ENCODE measurements at regions of chr11 and their contacts with region 1.

Region 1: DNA sequence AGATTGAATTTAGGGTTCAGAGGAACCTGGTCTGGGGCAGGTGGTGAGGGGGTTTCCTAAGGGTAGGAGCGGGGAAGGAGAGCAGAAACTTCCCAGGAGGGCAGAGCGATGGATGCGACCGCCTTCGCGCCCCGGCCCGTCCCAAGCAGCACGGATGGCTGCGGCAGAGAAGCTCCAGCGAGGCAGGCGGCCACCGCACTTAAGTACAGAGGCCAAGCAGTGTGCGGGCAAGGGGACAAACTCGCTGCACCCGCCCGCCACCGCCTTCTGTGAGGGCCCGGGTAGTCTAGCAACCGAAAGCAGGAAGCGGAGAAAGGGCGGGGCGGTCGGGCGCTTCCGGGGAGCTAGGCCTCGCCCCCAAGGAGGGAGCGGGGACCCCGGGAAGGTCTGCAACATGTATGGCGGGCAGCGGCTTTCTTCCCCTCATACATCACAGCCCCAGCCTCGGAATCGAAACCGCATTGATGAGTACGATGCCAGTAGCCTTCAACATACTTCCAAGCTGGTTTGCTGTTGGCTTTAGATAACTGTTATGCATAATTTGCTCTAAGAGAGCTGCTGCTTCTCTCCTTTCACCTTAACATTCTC is at the start of gene AGBL2:
- DNase-seq: peak; percentile 25
- ATAC-seq: peak; percentile 100
- H3K4me3 ChIP-seq: peak within 1 kb of the TSS; percentile 87
- H3K27ac ChIP-seq: peak within 1 kb of the TSS; percentile 85
- H3K4me1 ChIP-seq: no peaks in the 10 kb centered on the region
- H3K27me3 ChIP-seq: no peaks in the 10 kb centered on the region
- CTCF ChIP-seq: no peak
- EP300 ChIP-seq: no peak
- POLR2A ChIP-seq: peak; percentile 97
- RAD21 ChIP-seq: no peak
- polyA plus RNA-seq, gene AGBL2: 0.93 to 1.6 TPM

Region 2: GRCh38 chr11:46677991-46678740 is 1037.0 kb before region 1 on chr11:
- CTCF ChIA-PET with region 1: no interaction called
- POLR2A ChIA-PET with region 1: no interaction called
- RAD21 ChIA-PET with region 1: no interaction called
- SMC1A ChIA-PET with region 1: no interaction called
- in situ Hi-C with region 1: no loop called
- intact Hi-C with region 1: no loop called
- DNase-seq: no peak
- ATAC-seq: peak; percentile 32; the same call in 2 of the 3 replicates
- H3K4me3 ChIP-seq: no peak overlapping the region
- H3K27ac ChIP-seq: no peak overlapping the region
- H3K4me1 ChIP-seq: no peaks in the 10 kb centered on the region
- H3K27me3 ChIP-seq: no peaks in the 10 kb centered on the region
- CTCF ChIP-seq: no peak
- EP300 ChIP-seq: no peak
- POLR2A ChIP-seq: no peak
- RAD21 ChIP-seq: no peak

Region 3: GRCh38 chr11:47642099-47642855 is 72.9 kb before region 1 on chr11 and contains the start of gene MTCH2:
- CTCF ChIA-PET with region 1: no interaction called
- POLR2A ChIA-PET with region 1: interaction called, 3 read pairs
- RAD21 ChIA-PET with region 1: interaction called, 6 read pairs
- SMC1A ChIA-PET with region 1: interaction called, 8 read pairs
- in situ Hi-C with region 1: no loop called
- intact Hi-C with region 1: loop called (anchors 2 kb)
- DNase-seq: peak; percentile 92
- ATAC-seq: peak; percentile 96
- H3K4me3 ChIP-seq: peak within 1 kb of the TSS; percentile 81
- H3K27ac ChIP-seq: peak within 1 kb of the TSS; percentile 90
- H3K4me1 ChIP-seq: peaks cover 7% of the 10 kb centered on the region
- H3K27me3 ChIP-seq: no peaks in the 10 kb centered on the region
- CTCF ChIP-seq: peak in 2 of 3 experiments; percentile 22 to 39; a peak in 3 of 6 replicates
- EP300 ChIP-seq: no peak
- POLR2A ChIP-seq: peak; percentile 98
- RAD21 ChIP-seq: no peak
- polyA plus RNA-seq, gene MTCH2: 338 to 341 TPM

Region 4: DNA sequence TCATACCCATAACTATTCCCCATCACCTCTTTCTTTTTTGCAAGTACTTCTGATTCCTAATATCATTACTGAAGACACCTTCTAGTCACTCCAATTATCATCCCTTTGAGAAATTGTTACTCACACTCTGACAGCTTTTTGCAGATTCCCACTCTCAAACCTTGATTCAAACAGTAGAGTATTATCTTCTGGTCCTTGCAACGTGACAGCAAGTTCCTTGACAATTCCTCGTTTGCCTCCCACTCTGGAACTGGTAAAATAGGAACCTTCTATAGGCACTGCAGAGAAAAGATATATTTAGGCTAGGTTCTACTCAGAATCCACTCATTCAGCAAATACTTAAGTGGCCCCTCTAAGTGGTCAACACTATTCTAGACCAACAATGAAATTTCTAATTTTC is 23.2 kb before region 1 on chr11:
- CTCF ChIA-PET with region 1: no interaction called
- POLR2A ChIA-PET with region 1: no interaction called
- RAD21 ChIA-PET with region 1: no interaction called
- SMC1A ChIA-PET with region 1: no interaction called
- in situ Hi-C with region 1: no loop called
- intact Hi-C with region 1: no loop called
- DNase-seq: no peak
- ATAC-seq: no peak
- H3K4me3 ChIP-seq: no peak overlapping the region
- H3K27ac ChIP-seq: no peak overlapping the region
- H3K4me1 ChIP-seq: no peaks in the 10 kb centered on the region
- H3K27me3 ChIP-seq: no peaks in the 10 kb centered on the region
- CTCF ChIP-seq: no peak
- EP300 ChIP-seq: no peak
- POLR2A ChIP-seq: no peak
- RAD21 ChIP-seq: no peak

Region 5: DNA sequence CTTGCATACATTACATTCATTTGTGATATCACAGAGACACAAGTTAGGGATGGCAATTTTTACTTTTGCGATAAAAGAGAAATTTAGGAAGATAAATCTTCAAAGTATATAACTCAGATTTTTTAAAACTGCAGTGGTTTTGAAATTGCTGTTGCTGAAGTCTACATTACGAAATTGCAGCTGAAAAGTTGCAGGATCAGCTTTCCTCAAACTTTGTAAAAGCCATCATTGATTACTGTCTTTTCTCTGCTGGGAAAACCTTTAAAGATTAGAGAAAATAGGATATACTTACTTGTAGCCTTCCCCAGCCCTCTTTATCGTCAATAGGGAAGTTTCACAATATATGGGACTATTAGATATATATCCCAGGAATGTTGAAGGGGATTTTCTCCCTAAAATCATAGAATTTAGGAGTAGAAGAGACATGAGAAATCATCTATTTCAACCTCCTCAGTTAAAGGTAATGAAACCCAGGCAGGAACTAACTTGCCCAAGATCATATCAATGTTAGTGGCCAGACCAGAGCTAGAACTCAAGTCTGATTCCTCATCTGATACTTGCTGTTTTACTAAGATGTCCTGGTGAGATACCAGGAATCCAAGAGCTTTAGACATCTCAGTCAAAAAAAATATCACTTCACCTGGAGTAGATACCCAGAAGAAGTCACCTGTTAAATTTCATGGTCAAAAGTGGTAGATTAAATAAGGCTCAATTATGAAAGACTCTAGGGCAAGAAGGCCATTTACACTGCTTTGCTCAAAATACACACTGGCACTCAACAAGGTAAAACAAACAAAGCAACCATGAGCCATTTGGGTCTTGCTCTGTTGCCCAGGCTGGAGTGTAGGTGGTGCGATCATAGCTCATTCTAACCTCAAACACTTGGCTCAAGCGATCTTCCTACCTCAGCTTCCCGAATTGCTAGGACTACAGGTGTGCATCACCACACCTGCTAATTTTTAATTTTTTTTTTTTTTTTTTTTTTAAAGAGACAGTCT is 10.6 kb after region 1 on chr11:
- CTCF ChIA-PET with region 1: interaction called, 6 read pairs
- POLR2A ChIA-PET with region 1: interaction called, 14 read pairs
- RAD21 ChIA-PET with region 1: interaction called, 4 read pairs
- SMC1A ChIA-PET with region 1: interaction called, 3 read pairs
- in situ Hi-C with region 1: no loop called
- intact Hi-C with region 1: no loop called
- DNase-seq: no peak
- ATAC-seq: no peak
- H3K4me3 ChIP-seq: no peak overlapping the region
- H3K27ac ChIP-seq: no peak overlapping the region
- H3K4me1 ChIP-seq: no peaks in the 10 kb centered on the region
- H3K27me3 ChIP-seq: no peaks in the 10 kb centered on the region
- CTCF ChIP-seq: no peak
- EP300 ChIP-seq: no peak
- POLR2A ChIP-seq: no peak
- RAD21 ChIP-seq: no peak